B cell (primary cell): ENCODE measurements at regions of chr2 and their contacts with region 1.

Region 1: DNA sequence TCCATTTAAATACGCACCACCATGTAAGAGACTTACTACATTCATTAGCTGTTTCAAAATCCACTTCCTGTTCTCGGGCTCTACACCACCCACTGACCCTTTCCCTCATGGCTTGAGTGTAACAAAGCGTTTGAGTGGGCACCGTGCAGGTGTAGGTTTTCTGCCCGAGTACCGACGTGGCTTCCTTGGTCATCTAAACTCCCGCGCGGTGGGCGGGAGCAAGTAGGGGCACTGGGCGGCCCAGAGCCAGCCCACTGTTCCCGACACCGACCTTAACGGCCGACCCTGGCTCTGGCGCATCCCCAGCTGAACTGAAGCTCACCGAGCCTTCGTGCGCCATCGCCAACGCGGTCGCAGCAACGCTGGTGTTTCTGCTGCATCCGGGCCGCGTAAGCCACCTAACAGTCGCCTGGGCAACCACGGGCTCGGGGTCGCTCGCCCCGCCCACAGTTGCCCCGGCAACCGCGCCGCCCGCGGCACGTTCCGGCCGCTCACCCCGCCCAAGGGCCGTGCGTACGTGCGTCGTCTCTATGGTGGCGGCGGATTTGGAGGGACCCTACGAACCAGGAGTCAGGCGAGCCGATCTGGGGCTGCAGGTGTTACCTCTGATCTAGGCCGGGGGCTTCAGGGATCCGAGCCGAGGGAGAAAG is at the starts of genes C2orf81 and WDR54:
- DNase-seq: peak; percentile 97
- ATAC-seq: peak; percentile 90
- H3K4me3 ChIP-seq: peak within 1 kb of the TSS; percentile 61 to 98 (median 90)
- H3K4me3 Mint-ChIP-seq: peak within 1 kb of the TSS; percentile 98
- H3K27ac ChIP-seq: peak within 1 kb of the TSS; percentile 94
- H3K27ac Mint-ChIP-seq: peak within 1 kb of the TSS; percentile 99
- H3K4me1 ChIP-seq: peaks cover 29 to 41% of the 10 kb centered on the region in 2 donors
- H3K4me1 Mint-ChIP-seq: peaks cover 43% of the 10 kb centered on the region
- H3K27me3 ChIP-seq: no peaks in the 10 kb centered on the region
- H3K27me3 Mint-ChIP-seq: no peaks in the 10 kb centered on the region
- CTCF ChIP-seq: no peak
- total RNA-seq, gene C2orf81: 8.6 and 9.1 TPM in 2 replicates
- total RNA-seq, gene WDR54: 39.0 and 42.2 TPM in 2 replicates

Region 2: GRCh38 chr2:74249406-74250127 is 171.8 kb before region 1 on chr2:
- CTCF ChIA-PET with region 1: no interaction called
- POLR2A ChIA-PET with region 1: no interaction called
- intact Hi-C with region 1: no loop called
- DNase-seq: peak; percentile 17
- ATAC-seq: no peak
- H3K4me3 ChIP-seq: no peak overlapping the region
- H3K4me3 Mint-ChIP-seq: no peak overlapping the region
- H3K27ac ChIP-seq: no peak overlapping the region
- H3K27ac Mint-ChIP-seq: no peak overlapping the region
- H3K4me1 ChIP-seq: no peaks in the 10 kb centered on the region
- H3K4me1 Mint-ChIP-seq: peaks cover 6% of the 10 kb centered on the region
- H3K27me3 ChIP-seq: no peaks in the 10 kb centered on the region
- H3K27me3 Mint-ChIP-seq: no peaks in the 10 kb centered on the region
- CTCF ChIP-seq: no peak

Region 3: GRCh38 chr2:74440378-74441169 is 19.2 kb after region 1 on chr2:
- CTCF ChIA-PET with region 1: interaction called, 7 read pairs
- POLR2A ChIA-PET with region 1: interaction called, 4 read pairs
- intact Hi-C with region 1: loop called (anchors 1 kb)
- DNase-seq: peak; percentile 78
- ATAC-seq: peak; percentile 96
- H3K4me3 ChIP-seq: peak overlapping the region; percentile 14 to 55 (median 49)
- H3K4me3 Mint-ChIP-seq: peak overlapping the region; percentile 83
- H3K27ac ChIP-seq: no peak overlapping the region
- H3K27ac Mint-ChIP-seq: peak overlapping the region; percentile 67
- H3K4me1 ChIP-seq: peaks cover 36 to 46% of the 10 kb centered on the region in 2 donors
- H3K4me1 Mint-ChIP-seq: peaks cover 47% of the 10 kb centered on the region
- H3K27me3 ChIP-seq: peaks cover 0 to 43% (median 13%) of the 10 kb centered on the region in 4 experiments
- H3K27me3 Mint-ChIP-seq: peaks cover 17% of the 10 kb centered on the region
- CTCF ChIP-seq: peak; percentile 26